Caco-2 (cell line): ENCODE measurements at regions of chr5 and their contacts with region 1.

Region 1: DNA sequence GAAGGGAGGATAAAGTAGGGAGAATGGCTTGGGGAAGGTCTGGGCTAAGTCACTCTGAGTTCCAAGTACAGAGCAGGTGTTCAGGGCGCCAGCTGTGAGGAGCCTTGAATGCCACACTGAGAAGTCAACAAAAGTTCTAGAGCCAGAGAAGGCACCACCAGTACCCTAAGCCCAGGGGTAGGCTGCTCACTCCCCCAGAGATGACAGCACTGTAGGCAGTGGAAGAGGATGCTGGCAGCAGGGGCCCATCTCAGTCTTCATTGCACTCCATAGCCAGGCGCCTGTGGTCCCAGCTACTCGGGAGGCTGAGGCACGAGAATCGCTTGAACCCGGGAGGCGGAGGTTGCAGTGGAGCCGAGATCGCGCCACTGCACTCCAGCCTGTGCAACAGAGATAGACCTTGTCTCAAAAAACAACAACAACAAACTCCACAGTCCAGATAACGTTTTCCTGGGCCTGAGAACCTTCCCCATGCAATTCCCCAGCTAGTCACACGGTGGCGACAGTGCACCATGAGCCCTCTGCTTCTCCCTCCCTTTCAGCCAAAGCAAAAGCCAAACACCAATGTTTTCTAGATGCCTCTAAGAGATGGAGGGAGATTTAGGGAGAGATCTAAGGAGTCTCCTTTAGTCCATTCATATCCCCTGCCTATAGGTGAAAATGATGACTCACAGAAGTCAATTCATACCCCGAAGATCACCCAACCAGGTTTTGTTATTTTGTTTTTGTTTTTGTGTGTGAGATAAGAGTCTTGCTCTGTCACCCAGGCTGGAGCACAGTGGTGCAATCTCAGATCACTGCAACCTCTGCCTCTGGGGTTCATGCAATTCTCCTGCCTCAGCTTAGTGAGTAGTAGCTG is 19.8 kb upstream of the NSD1 start:
- DNase-seq: peak; percentile 65 to 85
- H3K4me3 ChIP-seq: no peak overlapping the region
- H3K4me3 Mint-ChIP-seq: no peak overlapping the region
- H3K27ac Mint-ChIP-seq: no peak overlapping the region
- H3K4me1 ChIP-seq: peaks cover 4% of the 10 kb centered on the region; the same call in 1 of the 2 replicates
- H3K4me1 Mint-ChIP-seq: peaks cover 22% of the 10 kb centered on the region
- H3K27me3 ChIP-seq: no peaks in the 10 kb centered on the region
- H3K27me3 Mint-ChIP-seq: no peaks in the 10 kb centered on the region
- CTCF ChIP-seq: peak; percentile 95 to 99

Region 2: GRCh38 chr5:177022384-177023308 is 91.1 kb before region 1 on chr5 and contains the start of gene ZNF346:
- CTCF ChIA-PET with region 1: interaction called, 11 read pairs
- POLR2A ChIA-PET with region 1: no interaction called
- intact Hi-C with region 1: no loop called
- DNase-seq: peak; percentile 93
- H3K4me3 ChIP-seq: peak within 1 kb of the TSS; percentile 70
- H3K4me3 Mint-ChIP-seq: peak within 1 kb of the TSS; percentile 89
- H3K27ac Mint-ChIP-seq: peak within 1 kb of the TSS; percentile 90
- H3K4me1 ChIP-seq: peaks cover 7% of the 10 kb centered on the region
- H3K4me1 Mint-ChIP-seq: peaks cover 23% of the 10 kb centered on the region
- H3K27me3 ChIP-seq: no peaks in the 10 kb centered on the region
- H3K27me3 Mint-ChIP-seq: no peaks in the 10 kb centered on the region
- CTCF ChIP-seq: peak; percentile 29 to 53
- total RNA-seq, gene ZNF346: 24.2 and 29.3 TPM in 2 replicates

Region 3: GRCh38 chr5:177071666-177072385 is 42.0 kb before region 1 on chr5:
- CTCF ChIA-PET with region 1: interaction called, 132 read pairs
- POLR2A ChIA-PET with region 1: no interaction called
- intact Hi-C with region 1: loop called (anchors 1 kb)
- DNase-seq: peak; percentile 85 to 87
- H3K4me3 ChIP-seq: no peak overlapping the region
- H3K4me3 Mint-ChIP-seq: peak overlapping the region; percentile 4
- H3K27ac Mint-ChIP-seq: peak overlapping the region; percentile 6
- H3K4me1 ChIP-seq: peaks cover 9% of the 10 kb centered on the region; the same call in 1 of the 2 replicates
- H3K4me1 Mint-ChIP-seq: peaks cover 12% of the 10 kb centered on the region
- H3K27me3 ChIP-seq: no peaks in the 10 kb centered on the region
- H3K27me3 Mint-ChIP-seq: no peaks in the 10 kb centered on the region
- CTCF ChIP-seq: peak; percentile 82 to 93

Region 4: GRCh38 chr5:177086924-177087706 is 26.7 kb before region 1 on chr5:
- CTCF ChIA-PET with region 1: interaction called, 60 read pairs
- POLR2A ChIA-PET with region 1: interaction called, 9 read pairs
- intact Hi-C with region 1: loop called (anchors 1 kb)
- DNase-seq: peak; percentile 98
- H3K4me3 ChIP-seq: peak overlapping the region; percentile 93
- H3K4me3 Mint-ChIP-seq: peak overlapping the region; percentile 88
- H3K27ac Mint-ChIP-seq: peak overlapping the region; percentile 93
- H3K4me1 ChIP-seq: peaks cover 55% of the 10 kb centered on the region
- H3K4me1 Mint-ChIP-seq: peaks cover 28% of the 10 kb centered on the region
- H3K27me3 ChIP-seq: no peaks in the 10 kb centered on the region
- H3K27me3 Mint-ChIP-seq: no peaks in the 10 kb centered on the region
- CTCF ChIP-seq: peak; percentile 83 to 94

Region 5: DNA sequence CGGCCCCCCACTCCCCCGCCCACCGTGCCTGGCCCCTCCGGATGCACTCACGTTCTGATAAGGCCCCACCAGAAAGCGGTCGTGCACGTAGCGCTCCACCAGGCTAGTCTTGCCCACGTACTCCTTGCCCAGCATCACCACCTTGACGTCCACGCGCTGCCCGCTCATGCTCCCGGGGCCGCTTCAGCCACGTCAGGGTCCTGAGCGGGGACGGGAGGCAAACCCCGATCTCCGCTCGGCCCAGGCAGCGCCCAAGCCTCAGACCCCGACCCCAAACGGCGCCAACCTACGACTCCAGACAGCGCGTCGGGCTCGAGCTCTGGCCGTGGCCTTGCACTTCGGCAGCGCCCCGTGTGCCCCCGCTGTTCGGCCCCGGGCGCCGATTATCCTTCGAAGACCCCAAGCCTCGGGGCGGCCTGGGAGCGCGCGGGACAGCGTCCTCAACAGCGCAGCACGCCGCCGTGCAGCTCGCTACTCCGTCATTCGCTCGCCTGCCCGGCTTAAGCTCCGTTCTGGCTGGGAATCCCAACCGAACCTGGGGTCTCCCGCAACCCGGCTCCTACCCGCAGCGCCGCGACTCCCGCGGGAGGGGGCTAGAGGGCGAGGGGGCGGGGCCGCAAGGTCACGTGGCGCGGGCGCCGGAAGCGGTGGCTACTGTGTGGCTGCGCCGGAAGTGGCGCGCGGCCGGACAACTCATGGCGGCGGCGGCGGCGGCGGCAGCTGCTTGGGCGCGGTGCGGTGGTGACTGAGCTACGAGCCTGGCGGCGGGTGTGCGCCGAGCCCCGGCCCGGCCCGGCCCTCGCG is 189.5 kb after region 1 on chr5 and contains the starts of genes PRELID1 and RAB24:
- CTCF ChIA-PET with region 1: interaction called, 13 read pairs
- POLR2A ChIA-PET with region 1: no interaction called
- intact Hi-C with region 1: loop called (anchors 1 kb)
- DNase-seq: peak; percentile 87 to 93
- H3K4me3 ChIP-seq: peak within 1 kb of the TSS; percentile 89
- H3K4me3 Mint-ChIP-seq: peak within 1 kb of the TSS; percentile 94
- H3K27ac Mint-ChIP-seq: peak within 1 kb of the TSS; percentile 94
- H3K4me1 ChIP-seq: peaks cover 29% of the 10 kb centered on the region
- H3K4me1 Mint-ChIP-seq: peaks cover 21% of the 10 kb centered on the region
- H3K27me3 ChIP-seq: no peaks in the 10 kb centered on the region
- H3K27me3 Mint-ChIP-seq: no peaks in the 10 kb centered on the region
- CTCF ChIP-seq: peak; percentile 36 to 55
- total RNA-seq, gene PRELID1: 201 and 229 TPM in 2 replicates
- total RNA-seq, gene RAB24: 29.9 and 31.7 TPM in 2 replicates

Region 6: GRCh38 chr5:177336112-177336511 is 222.3 kb after region 1 on chr5:
- CTCF ChIA-PET with region 1: no interaction called
- POLR2A ChIA-PET with region 1: no interaction called
- intact Hi-C with region 1: loop called (anchors 1 kb)
- DNase-seq: peak in 1 of 2 experiments; percentile 65
- H3K4me3 ChIP-seq: no peak overlapping the region
- H3K4me3 Mint-ChIP-seq: no peak overlapping the region
- H3K27ac Mint-ChIP-seq: peak overlapping the region; percentile 41
- H3K4me1 ChIP-seq: no peaks in the 10 kb centered on the region
- H3K4me1 Mint-ChIP-seq: peaks cover 7% of the 10 kb centered on the region
- H3K27me3 ChIP-seq: no peaks in the 10 kb centered on the region
- H3K27me3 Mint-ChIP-seq: no peaks in the 10 kb centered on the region
- CTCF ChIP-seq: peak; percentile 53 to 71

Region 7: DNA sequence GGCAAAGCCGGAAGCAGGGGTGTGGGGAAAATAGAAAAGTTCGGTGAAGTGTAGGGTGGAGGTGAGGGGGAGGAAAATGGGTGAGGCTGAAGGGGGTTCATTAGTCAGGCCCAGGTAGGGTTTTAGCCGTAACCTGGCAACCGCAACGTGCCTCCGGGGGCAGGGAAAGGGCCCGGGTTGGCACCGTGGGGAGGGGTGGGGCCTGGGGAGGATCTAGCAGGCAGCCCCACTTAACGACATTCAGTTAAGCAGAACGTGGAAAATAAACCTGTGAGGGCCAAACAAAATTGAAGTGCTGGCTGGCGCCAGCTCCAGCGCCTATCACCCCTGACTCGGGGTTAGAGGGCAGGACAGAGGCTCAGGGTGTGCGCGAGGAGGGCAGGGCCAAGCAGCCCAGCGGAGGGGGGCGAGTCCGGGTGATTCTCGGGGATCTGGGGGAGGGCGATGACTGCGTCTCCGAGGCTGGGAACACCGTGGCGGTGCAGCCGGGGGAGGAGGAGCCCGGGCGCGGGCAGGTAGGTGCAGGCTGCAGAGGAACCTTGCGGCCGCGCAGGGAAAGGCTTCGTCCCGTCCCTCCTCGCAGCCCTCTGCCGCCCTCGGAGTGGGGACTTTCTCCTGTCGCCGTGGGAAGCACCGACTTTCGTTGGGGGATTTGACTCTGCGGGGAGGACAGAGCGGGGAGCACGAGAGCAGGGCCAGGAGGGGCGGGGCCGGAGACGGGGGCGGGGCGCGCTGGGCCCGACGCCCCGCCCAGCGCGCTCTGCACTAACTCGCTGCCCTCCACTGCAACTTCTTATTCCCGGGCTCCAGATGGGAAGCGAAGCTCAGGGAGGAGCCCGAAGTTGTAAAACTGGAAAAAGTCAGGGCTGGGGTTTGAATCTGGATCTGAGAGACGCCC is 249.1 kb after region 1 on chr5:
- CTCF ChIA-PET with region 1: no interaction called
- POLR2A ChIA-PET with region 1: no interaction called
- intact Hi-C with region 1: no loop called
- DNase-seq: peak; percentile 67 to 69
- H3K4me3 ChIP-seq: peak overlapping the region; percentile 60
- H3K4me3 Mint-ChIP-seq: peak overlapping the region; percentile 88
- H3K27ac Mint-ChIP-seq: peak overlapping the region; percentile 76
- H3K4me1 ChIP-seq: no peaks in the 10 kb centered on the region
- H3K4me1 Mint-ChIP-seq: peaks cover 9% of the 10 kb centered on the region
- H3K27me3 ChIP-seq: no peaks in the 10 kb centered on the region
- H3K27me3 Mint-ChIP-seq: no peaks in the 10 kb centered on the region
- CTCF ChIP-seq: no peak